Psoas muscle (tissue), 8 donors: ENCODE measurements at regions of chr7 and their contacts with region 1.

Region 1: GRCh38 chr7:122528879-122529481 is 169.9 kb downstream of the RNF133 start:
- DNase-seq: no peak
- ATAC-seq: no peak
- H3K4me3 ChIP-seq: no peak overlapping the region
- H3K27ac ChIP-seq: no peak overlapping the region
- H3K4me1 ChIP-seq: no peaks in the 10 kb centered on the region
- H3K27me3 ChIP-seq: no peaks in the 10 kb centered on the region
- CTCF ChIP-seq: peak; percentile 52

Region 2: GRCh38 chr7:122092964-122093797 is 435.8 kb before region 1 on chr7:
- intact Hi-C with region 1: loop called in 1 of 2 experiments (anchors 5 kb)
- DNase-seq: peak; percentile 46 to 52
- ATAC-seq: peak in 2 of 4 donors; percentile 36 to 55
- H3K4me3 ChIP-seq: no peak overlapping the region
- H3K27ac ChIP-seq: no peak overlapping the region
- H3K4me1 ChIP-seq: no peaks in the 10 kb centered on the region
- H3K27me3 ChIP-seq: no peaks in the 10 kb centered on the region
- CTCF ChIP-seq: peak; percentile 71

Region 3: GRCh38 chr7:122219253-122219865 is 309.6 kb before region 1 on chr7:
- intact Hi-C with region 1: loop called (anchors 2 to 5 kb)
- DNase-seq: no peak
- ATAC-seq: no peak
- H3K4me3 ChIP-seq: no peak overlapping the region
- H3K27ac ChIP-seq: no peak overlapping the region
- H3K4me1 ChIP-seq: no peaks in the 10 kb centered on the region
- H3K27me3 ChIP-seq: no peaks in the 10 kb centered on the region
- CTCF ChIP-seq: peak; percentile 67